GM12878 (cell line): ENCODE measurements at regions of chr10 and their contacts with region 1.

Region 1: DNA sequence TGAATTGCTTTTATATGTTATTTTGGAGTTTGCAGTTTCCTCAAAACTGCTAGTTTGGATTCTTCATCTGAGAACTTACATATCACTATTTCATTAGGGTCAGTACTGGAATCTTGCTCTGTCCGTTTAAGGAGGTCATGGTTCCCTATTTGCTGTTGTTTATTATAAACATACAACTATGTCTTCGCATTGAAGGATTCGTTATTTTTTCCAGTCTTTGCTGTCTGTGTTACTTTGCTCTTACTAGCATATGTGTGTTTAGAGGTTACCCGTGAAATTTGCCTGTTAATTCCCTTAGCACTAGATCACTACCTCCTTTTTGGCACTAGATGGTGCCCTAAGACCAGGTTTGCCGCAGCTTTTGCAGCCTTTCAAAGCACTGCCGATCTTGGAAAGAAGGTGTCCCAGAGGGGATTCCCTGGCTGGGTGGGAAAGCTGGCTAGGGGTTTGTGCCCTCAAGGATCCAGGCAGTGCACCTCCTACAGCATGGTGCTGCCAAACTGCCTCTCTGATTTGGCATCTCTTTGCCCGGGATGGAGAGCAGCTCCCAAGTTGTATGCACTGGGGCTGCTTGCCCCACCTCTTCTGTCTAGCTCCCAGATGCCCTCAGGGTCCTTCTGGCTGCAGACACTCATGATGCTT is 103.1 kb upstream of the APBB1IP start:
- DNase-seq: peak; percentile 73
- ATAC-seq: peak; percentile 95
- H3K4me3 ChIP-seq: peak overlapping the region; percentile 62
- H3K27ac ChIP-seq: peak overlapping the region; percentile 71
- H3K4me1 ChIP-seq: peaks cover 8% of the 10 kb centered on the region
- H3K27me3 ChIP-seq: no peaks in the 10 kb centered on the region
- CTCF ChIP-seq: peak; percentile 70 to 92 (median 85)
- EP300 ChIP-seq: no peak
- POLR2A ChIP-seq: no peak; the same call in 1 of the 2 replicates
- RAD21 ChIP-seq: peak; percentile 99

Region 2: DNA sequence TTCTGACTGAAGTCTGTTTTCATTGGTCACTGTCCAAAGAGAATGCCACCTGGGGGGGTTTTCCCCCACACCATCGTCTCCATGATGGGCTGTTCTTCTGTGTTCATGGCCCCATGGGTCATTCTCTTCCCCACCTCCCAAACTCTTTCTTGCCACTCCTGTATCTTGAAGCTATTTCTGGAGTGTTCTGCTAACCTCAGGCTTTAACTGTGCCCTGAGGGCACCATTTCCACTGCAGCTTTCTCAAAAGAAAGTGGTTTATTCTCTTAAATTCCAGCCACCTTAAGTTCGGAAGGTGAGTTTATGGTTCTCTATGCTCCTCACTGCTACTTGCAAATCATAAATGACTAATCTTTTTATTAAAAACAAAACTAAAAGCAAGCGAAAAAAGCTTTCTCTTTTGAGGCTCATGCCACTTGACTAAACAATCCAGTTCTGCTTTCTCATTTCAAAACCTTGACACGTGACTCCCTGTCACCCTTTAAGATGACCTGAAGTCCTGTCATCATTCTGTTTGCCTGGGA is 95.7 kb after region 1 on chr10:
- CTCF ChIA-PET with region 1: interaction called, 6 read pairs
- POLR2A ChIA-PET with region 1: no interaction called
- RAD21 ChIA-PET with region 1: interaction called, 15 read pairs
- SMC1A ChIA-PET with region 1: interaction called, 3 read pairs
- in situ Hi-C with region 1: no loop called
- intact Hi-C with region 1: no loop called
- DNase-seq: peak; percentile 91
- ATAC-seq: peak; percentile 92
- H3K4me3 ChIP-seq: peak overlapping the region; percentile 44
- H3K27ac ChIP-seq: peak overlapping the region; percentile 94
- H3K4me1 ChIP-seq: peaks cover 19% of the 10 kb centered on the region
- H3K27me3 ChIP-seq: no peaks in the 10 kb centered on the region
- CTCF ChIP-seq: no peak
- EP300 ChIP-seq: peak; percentile 38 to 60; a peak in 2 of 4 replicates
- POLR2A ChIP-seq: no peak
- RAD21 ChIP-seq: no peak

Region 3: GRCh38 chr10:26448706-26449435 is 113.8 kb after region 1 on chr10:
- CTCF ChIA-PET with region 1: no interaction called
- POLR2A ChIA-PET with region 1: no interaction called
- RAD21 ChIA-PET with region 1: interaction called, 3 read pairs
- SMC1A ChIA-PET with region 1: no interaction called
- in situ Hi-C with region 1: no loop called
- intact Hi-C with region 1: loop called (anchors 2 kb)
- DNase-seq: peak; percentile 84
- ATAC-seq: peak; percentile 77
- H3K4me3 ChIP-seq: peak overlapping the region; percentile 44; the same call in 1 of the 2 replicates
- H3K27ac ChIP-seq: peak overlapping the region; percentile 84
- H3K4me1 ChIP-seq: peaks cover 26% of the 10 kb centered on the region
- H3K27me3 ChIP-seq: no peaks in the 10 kb centered on the region
- CTCF ChIP-seq: peak in 1 of 3 experiments; percentile 11; a peak in 1 of 6 replicates
- EP300 ChIP-seq: peak in 1 of 2 experiments; percentile 80; a peak in 2 of 4 replicates
- POLR2A ChIP-seq: 0 out of 2 replicates have a peak, but pooled peaks have one; percentile 27
- RAD21 ChIP-seq: peak; percentile 43

Region 4: DNA sequence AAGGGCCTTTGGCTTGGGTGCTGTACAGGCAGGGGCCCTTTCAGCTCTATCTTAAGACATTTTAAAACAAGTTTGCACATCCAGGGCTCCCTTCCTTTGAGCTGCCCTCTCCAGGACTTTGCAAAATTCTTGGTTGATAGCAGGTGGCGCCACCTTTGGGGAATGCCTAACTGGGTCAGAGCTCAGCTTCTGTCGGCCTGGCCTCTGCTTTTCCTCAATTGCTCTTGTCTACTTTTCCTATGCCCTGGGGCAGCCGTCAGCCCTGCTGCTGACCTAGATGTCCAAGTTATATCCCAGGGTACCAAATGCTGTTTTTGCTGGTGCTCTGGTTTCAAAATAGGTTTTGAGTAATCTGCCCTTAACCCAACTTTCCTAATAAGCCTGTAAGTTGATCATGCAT is 168.9 kb after region 1 on chr10:
- CTCF ChIA-PET with region 1: interaction called, 10 read pairs
- POLR2A ChIA-PET with region 1: no interaction called
- RAD21 ChIA-PET with region 1: interaction called, 31 read pairs
- SMC1A ChIA-PET with region 1: interaction called, 27 read pairs
- in situ Hi-C with region 1: no loop called
- intact Hi-C with region 1: loop called (anchors 1 kb)
- DNase-seq: no peak
- ATAC-seq: peak; percentile 64
- H3K4me3 ChIP-seq: no peak overlapping the region
- H3K27ac ChIP-seq: no peak overlapping the region
- H3K4me1 ChIP-seq: no peaks in the 10 kb centered on the region
- H3K27me3 ChIP-seq: no peaks in the 10 kb centered on the region
- CTCF ChIP-seq: peak; percentile 13 to 45 (median 38); a peak in 4 of 6 replicates
- EP300 ChIP-seq: no peak
- POLR2A ChIP-seq: no peak
- RAD21 ChIP-seq: peak; percentile 34; the same call in 1 of the 2 replicates

Region 5: DNA sequence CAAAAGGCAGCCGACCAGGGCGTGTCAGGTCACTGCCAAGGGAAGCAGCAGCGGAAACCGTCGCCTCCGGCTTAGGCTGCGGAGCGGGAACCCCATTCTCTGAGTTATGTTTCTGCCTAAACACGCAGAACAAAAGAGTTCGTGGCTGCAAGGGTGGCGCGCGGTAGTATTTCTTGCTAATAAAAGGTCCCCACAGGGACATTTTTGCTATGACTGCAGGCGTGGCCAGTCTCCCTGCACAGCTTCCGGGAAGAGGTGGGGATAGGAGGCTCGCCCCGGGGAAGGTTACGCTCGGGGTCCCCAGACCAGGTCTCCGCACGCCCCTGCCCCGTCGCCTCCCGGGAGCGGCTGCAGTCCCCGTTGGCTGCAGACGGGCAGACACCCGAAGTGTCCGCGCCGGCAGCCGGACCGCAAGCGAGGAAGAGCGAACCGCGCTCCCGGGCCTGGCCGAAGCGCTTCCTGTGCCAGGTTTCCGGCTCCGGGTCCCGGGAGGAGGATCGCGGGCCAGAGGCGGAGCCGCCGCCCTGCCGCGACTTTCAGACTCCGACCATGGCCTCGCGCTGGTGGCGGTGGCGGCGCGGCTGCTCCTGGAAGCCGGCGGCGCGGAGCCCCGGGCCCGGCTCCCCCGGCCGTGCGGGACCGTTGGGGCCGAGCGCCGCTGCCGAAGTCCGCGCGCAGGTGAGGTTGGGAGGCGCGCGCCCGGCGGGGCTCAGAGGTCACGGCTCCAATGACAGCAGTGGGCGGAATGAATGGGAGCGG is 362.3 kb after region 1 on chr10 and contains the start of gene PDSS1:
- CTCF ChIA-PET with region 1: interaction called, 4 read pairs
- POLR2A ChIA-PET with region 1: no interaction called
- RAD21 ChIA-PET with region 1: no interaction called
- SMC1A ChIA-PET with region 1: no interaction called
- in situ Hi-C with region 1: loop called (anchors 10 kb)
- intact Hi-C with region 1: no loop called
- DNase-seq: peak; percentile 16
- ATAC-seq: peak; percentile 89
- H3K4me3 ChIP-seq: peak within 1 kb of the TSS; percentile 97
- H3K27ac ChIP-seq: peak within 1 kb of the TSS; percentile 89
- H3K4me1 ChIP-seq: no peaks in the 10 kb centered on the region
- H3K27me3 ChIP-seq: no peaks in the 10 kb centered on the region
- CTCF ChIP-seq: no peak
- EP300 ChIP-seq: no peak
- POLR2A ChIP-seq: peak; percentile 87
- RAD21 ChIP-seq: no peak
- polyA plus RNA-seq, gene PDSS1: 12.2 to 23.5 TPM

Region 6: DNA sequence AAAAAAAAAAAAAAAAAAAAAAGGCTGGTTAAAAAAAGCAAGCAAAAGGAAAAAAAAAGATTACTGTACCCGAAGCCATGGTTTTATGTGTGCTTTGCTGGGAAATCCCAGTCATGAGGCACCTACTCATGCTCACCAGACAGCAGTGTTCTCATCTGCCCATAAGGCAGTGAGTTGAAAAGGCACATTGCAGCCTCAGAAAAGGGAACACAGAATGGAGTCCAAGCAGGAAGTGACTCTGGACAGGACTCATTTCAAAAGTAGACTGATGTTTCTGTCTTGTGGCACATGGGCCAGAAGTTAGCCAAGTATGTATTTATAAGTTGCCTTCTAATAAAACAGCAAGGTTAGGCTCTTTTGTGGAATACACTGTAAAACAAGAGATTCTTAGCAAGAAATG is 402.7 kb after region 1 on chr10:
- CTCF ChIA-PET with region 1: no interaction called
- POLR2A ChIA-PET with region 1: no interaction called
- RAD21 ChIA-PET with region 1: no interaction called
- SMC1A ChIA-PET with region 1: no interaction called
- in situ Hi-C with region 1: no loop called
- intact Hi-C with region 1: loop called (anchors 10 kb)
- DNase-seq: peak; percentile 95
- ATAC-seq: peak; percentile 90
- H3K4me3 ChIP-seq: no peak overlapping the region
- H3K27ac ChIP-seq: peak overlapping the region; percentile 92
- H3K4me1 ChIP-seq: peaks cover 62% of the 10 kb centered on the region
- H3K27me3 ChIP-seq: no peaks in the 10 kb centered on the region
- CTCF ChIP-seq: no peak
- EP300 ChIP-seq: peak; percentile 11 to 85; a peak in 3 of 4 replicates
- POLR2A ChIP-seq: peak; percentile 76
- RAD21 ChIP-seq: peak; percentile 24; the same call in 1 of the 2 replicates